Natural killer cell (primary cell): ENCODE measurements at regions of chr4 and their contacts with region 1.

Region 1: GRCh38 chr4:173168396-173169177 is at the start of gene GALNT7:
- DNase-seq: peak; percentile 40 to 77
- ATAC-seq: peak; percentile 56 to 60 (median 57)
- H3K4me3 ChIP-seq: peak within 1 kb of the TSS; percentile 62
- H3K4me3 Mint-ChIP-seq: peak within 1 kb of the TSS; percentile 99
- H3K27ac ChIP-seq: peak within 1 kb of the TSS; percentile 69
- H3K27ac Mint-ChIP-seq: peak within 1 kb of the TSS; percentile 80 to 93
- H3K4me1 ChIP-seq: peaks cover 16% of the 10 kb centered on the region
- H3K4me1 Mint-ChIP-seq: peaks cover 42 to 47% of the 10 kb centered on the region in 2 donors
- H3K27me3 ChIP-seq: no peaks in the 10 kb centered on the region
- H3K27me3 Mint-ChIP-seq: no peaks in the 10 kb centered on the region
- CTCF ChIP-seq: no peak
- total RNA-seq, gene GALNT7: 10.9 to 20.8 (median 15.6) TPM

Region 2: DNA sequence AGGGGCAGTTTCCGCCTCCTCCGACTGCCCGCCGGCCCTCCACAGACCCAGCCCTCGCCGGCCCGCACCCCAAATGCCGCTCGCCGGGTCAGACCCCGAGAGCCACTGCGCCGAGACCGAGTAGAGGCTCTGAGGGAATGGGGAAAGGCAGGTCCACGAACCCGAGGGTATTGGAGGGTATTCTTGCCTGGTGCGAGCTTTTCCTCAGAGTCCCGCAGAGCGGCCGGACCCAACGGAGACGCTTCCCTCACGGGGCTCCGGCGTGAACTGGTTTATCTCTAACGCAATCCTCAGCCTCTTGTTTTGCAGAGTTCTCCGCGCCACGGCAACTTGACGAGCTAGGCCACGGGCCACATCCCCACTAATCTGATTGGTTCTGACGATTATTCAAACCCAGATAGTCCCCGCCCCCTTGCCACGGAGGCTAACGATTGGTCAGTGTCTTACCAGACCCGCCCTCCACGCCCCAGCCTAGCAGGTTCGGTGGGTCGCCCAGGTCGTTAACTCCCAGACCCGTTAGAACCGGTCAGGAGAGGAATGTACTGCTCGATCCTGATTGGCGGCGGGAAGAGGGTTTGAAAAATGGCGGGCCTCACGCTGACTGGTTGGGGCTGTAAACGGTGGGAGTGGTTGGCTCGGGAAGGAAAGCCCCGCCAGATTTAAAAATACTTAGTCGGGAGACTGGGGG is 165.6 kb after region 1 on chr4 and contains the start of gene HMGB2:
- intact Hi-C with region 1: loop called (anchors 5 kb)
- DNase-seq: peak; percentile 99 to 100
- ATAC-seq: peak; percentile 90 to 98 (median 90)
- H3K4me3 ChIP-seq: peak within 1 kb of the TSS; percentile 60
- H3K4me3 Mint-ChIP-seq: peak within 1 kb of the TSS; percentile 99
- H3K27ac ChIP-seq: peak within 1 kb of the TSS; percentile 89
- H3K27ac Mint-ChIP-seq: peak within 1 kb of the TSS; percentile 98 to 99
- H3K4me1 ChIP-seq: peaks cover 11% of the 10 kb centered on the region
- H3K4me1 Mint-ChIP-seq: peaks cover 27 to 33% of the 10 kb centered on the region in 2 donors
- H3K27me3 ChIP-seq: no peaks in the 10 kb centered on the region
- H3K27me3 Mint-ChIP-seq: no peaks in the 10 kb centered on the region
- CTCF ChIP-seq: no peak
- total RNA-seq, gene HMGB2: 145 to 214 (median 151) TPM

Region 3: DNA sequence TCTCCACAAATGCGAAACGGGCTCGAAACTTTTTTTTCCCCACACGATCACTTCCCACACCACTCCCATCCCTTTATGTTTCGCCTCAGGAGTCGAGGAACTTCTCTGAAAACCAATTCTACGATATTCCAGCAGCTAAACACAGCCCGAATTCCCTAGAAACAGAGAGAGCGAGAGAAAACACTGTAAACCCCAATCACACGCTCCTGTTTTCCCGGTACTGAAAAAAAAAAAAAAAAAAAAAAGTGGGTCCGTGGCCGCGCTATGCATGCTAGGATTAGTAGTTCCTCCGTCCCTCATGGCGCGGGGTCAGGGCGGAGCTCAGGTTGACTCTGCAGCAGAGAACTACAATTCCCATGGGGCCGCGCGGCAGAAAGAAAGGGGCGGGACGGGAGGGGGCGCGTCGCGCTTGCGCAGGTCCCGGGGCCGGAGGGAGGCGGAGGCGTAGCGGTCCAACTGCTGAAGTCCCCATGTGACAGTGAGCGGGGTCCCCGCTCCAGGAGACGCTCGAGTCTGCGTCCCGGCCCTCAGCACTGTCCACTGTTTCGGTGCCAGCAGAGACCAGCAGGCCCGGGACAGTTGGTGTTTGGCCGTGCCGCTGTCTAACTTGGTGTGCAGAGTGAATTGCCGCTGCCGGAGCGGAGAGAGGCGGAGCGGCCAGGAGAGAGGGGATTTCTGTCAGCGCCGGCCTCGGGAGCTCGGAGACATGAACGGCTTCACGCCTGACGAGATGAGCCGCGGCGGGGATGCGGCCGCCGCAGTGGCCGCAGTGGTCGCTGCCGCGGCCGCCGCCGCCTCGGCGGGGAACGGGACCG is 202.1 kb after region 1 on chr4 and contains the start of gene SAP30:
- intact Hi-C with region 1: loop called (anchors 1 kb)
- DNase-seq: peak; percentile 90 to 98
- ATAC-seq: peak; percentile 85 to 95 (median 88)
- H3K4me3 ChIP-seq: peak within 1 kb of the TSS; percentile 98
- H3K4me3 Mint-ChIP-seq: peak within 1 kb of the TSS; percentile 100
- H3K27ac ChIP-seq: peak within 1 kb of the TSS; percentile 92
- H3K27ac Mint-ChIP-seq: peak within 1 kb of the TSS; percentile 92 to 94
- H3K4me1 ChIP-seq: peaks cover 13% of the 10 kb centered on the region
- H3K4me1 Mint-ChIP-seq: peaks cover 21 to 26% of the 10 kb centered on the region in 2 donors
- H3K27me3 ChIP-seq: no peaks in the 10 kb centered on the region
- H3K27me3 Mint-ChIP-seq: no peaks in the 10 kb centered on the region
- CTCF ChIP-seq: no peak
- total RNA-seq, gene SAP30: 2.6 to 9.1 (median 3.1) TPM